ENCODE measurements at regions of chr2 and their contacts with region 1.

Region 1: DNA sequence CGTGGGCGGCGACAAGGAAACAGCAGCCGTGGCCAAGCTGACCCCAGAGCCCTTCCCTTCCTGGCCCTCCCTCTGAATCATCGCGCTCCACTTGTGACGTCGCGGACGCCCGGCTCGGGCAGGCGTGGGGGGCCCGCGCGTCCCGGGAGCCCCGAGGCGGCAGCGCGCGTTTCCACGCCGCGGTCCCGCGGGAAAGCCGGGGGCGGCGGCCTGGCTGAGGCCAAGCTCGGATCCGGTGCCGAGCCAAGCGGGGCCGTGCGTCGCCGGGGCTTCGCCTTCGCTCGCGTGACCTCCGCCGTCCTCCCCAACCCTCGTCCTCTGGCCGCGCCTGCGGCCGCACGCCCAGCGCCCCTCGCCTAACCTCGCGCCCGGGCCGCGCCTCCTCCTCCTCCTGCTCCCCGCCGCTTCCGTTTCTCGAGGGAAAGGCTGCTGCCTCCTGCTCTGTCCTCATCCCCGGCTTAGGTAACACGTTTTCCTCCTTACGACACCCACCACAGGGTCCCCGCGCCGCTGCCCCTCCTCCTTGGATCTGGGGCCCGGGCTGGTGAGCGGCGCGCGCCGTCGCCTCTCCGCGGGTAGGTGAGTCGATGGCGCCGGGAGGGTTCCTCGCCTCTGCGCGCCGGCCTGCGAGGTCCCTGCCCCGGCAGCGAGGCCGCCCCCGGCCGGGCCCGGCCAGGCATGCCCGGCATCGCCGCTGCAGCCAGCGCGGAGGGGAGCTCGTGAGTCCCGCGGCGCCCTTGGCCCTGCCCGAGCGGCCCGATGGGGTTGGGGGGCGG is at the start of gene INPP1:
- DNase-seq: peak; percentile 59
- H3K4me3 ChIP-seq: peak within 1 kb of the TSS; percentile 68 to 82 (median 73)
- H3K27ac ChIP-seq: peak within 1 kb of the TSS; percentile 75
- H3K4me1 ChIP-seq: peaks cover 12% of the 10 kb centered on the region
- H3K27me3 ChIP-seq: no peaks in the 10 kb centered on the region
- CTCF ChIP-seq: no peak
- total RNA-seq, gene INPP1: 13.0 to 23.8 TPM

Region 2: GRCh38 chr2:190126798-190127197 is 216.9 kb before region 1 on chr2:
- CTCF ChIA-PET with region 1: no interaction called
- dilution Hi-C with region 1: no loop called
- in situ Hi-C with region 1: no loop called
- intact Hi-C with region 1: no loop called
- DNase-seq: no peak
- H3K4me3 ChIP-seq: no peak overlapping the region
- H3K27ac ChIP-seq: no peak overlapping the region
- H3K4me1 ChIP-seq: no peaks in the 10 kb centered on the region
- H3K27me3 ChIP-seq: no peaks in the 10 kb centered on the region
- CTCF ChIP-seq: no peak

Region 3: DNA sequence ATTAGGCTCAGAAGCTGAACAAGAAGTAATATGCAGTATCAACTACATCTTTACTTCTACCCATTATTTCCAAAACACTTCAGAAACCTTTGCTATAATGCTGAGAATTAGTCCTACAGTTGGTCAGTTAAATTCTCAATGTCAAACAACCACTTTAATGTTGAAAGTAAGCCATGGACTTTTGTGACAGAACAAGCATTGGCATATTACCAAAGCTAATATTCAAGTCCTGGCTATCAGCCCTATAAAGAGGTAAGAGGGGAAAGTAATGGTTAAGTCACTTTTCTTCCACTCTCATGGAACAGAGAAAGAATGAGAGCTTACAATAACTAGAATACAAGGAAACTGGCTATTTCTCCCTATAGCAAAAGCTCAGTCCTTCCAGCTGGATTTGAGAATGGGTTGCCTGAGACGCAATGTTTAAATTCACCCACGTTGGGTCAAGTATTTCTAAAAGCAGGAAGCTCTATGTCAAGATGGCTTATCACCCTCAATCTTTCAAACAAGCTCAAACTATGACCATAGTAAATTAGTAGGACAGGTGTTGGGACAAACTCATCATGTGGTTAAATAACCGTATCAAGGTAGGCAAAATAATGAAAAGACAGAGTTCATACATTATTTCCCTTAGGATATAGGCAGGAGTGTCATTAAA is 33.0 kb after region 1 on chr2:
- CTCF ChIA-PET with region 1: no interaction called
- dilution Hi-C with region 1: no loop called
- in situ Hi-C with region 1: no loop called
- intact Hi-C with region 1: loop called (anchors 1 kb)
- DNase-seq: no peak
- H3K4me3 ChIP-seq: no peak overlapping the region
- H3K27ac ChIP-seq: no peak overlapping the region
- H3K4me1 ChIP-seq: no peaks in the 10 kb centered on the region
- H3K27me3 ChIP-seq: no peaks in the 10 kb centered on the region
- CTCF ChIP-seq: no peak

Region 4: GRCh38 chr2:190408538-190409271 is 65.0 kb after region 1 on chr2:
- CTCF ChIA-PET with region 1: no interaction called
- dilution Hi-C with region 1: loop called (anchors 5 kb)
- in situ Hi-C with region 1: no loop called
- intact Hi-C with region 1: no loop called
- DNase-seq: peak; percentile 51
- H3K4me3 ChIP-seq: peak overlapping the region; percentile 64 to 90 (median 70)
- H3K27ac ChIP-seq: peak overlapping the region; percentile 61
- H3K4me1 ChIP-seq: peaks cover 46% of the 10 kb centered on the region
- H3K27me3 ChIP-seq: no peaks in the 10 kb centered on the region
- CTCF ChIP-seq: no peak

Region 5: DNA sequence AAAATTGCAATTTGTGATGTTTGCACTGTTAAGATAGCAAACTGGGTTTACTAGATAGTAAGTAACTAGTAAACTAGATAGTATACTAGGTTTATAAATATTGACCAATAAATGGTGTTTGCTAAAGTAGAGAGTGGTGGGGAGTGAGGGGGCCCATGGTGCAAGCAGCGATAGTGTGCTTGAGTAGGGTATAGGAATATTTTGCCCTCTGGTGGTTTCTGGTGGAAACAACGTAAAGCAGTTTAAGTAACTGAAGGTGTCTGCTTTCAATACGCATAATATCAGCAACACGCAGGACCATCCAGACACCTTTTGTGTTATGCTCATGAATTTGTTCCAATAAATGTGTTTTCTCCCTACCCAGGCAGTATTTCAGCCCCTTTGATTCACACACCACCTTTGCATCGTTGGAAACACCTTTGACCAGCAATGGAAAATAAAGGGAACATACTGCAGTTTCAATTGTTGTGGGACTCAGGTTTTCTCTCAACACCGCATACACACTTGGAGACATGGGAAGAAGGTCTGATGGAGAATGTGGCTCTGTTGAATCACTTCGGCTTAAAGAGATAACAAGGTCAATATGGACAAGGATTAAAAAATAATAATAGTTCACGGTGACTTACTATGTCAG is 687.0 kb after region 1 on chr2:
- CTCF ChIA-PET with region 1: no interaction called
- dilution Hi-C with region 1: no loop called
- in situ Hi-C with region 1: no loop called
- intact Hi-C with region 1: no loop called
- DNase-seq: no peak
- H3K4me3 ChIP-seq: no peak overlapping the region
- H3K27ac ChIP-seq: no peak overlapping the region
- H3K4me1 ChIP-seq: peaks cover 3% of the 10 kb centered on the region
- H3K27me3 ChIP-seq: no peaks in the 10 kb centered on the region
- CTCF ChIP-seq: peak; percentile 58 to 73